ENCODE measurements at regions of chr22 and their contacts with region 1.

Region 1: DNA sequence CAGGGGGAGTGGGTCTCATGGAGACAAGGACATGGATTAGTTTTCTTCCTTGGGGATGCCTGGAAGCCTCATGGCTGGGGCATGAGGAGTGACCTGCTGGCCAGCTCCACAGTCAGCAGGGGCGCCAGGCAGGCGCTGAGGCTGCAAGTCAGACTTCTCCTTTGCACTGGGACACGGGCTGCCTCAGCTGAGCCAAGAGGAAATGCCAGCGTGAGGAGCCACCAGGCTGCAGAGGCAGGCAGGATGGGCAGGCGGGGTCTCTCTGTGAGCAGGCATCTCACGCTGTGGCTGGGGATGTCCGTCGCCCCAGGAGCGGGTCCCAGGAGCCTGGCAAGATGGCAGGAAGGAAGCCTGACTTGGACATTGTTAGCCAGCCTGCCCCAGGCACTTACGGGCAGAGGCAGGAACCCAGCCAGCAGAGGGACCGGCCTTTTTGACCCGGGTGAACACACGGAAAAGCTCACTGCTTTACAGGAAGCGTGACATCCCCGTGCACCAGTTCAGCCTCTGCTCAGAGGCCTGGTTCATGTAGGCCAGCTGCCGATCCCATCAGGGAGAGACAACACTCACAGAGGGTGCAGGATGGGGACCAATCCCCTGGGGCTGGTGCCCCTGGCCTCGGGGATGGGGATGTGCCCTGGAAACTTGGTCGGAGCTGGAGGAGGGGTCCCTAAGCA is 10.2 kb downstream of the GNB1L start:
- DNase-seq: peak in 1 of 2 experiments; percentile 58
- H3K4me3 ChIP-seq: no peak overlapping the region
- H3K27ac ChIP-seq: no peak overlapping the region
- H3K4me1 ChIP-seq: peaks cover 18% of the 10 kb centered on the region
- H3K27me3 ChIP-seq: no peaks in the 10 kb centered on the region
- CTCF ChIP-seq: no peak

Region 2: DNA sequence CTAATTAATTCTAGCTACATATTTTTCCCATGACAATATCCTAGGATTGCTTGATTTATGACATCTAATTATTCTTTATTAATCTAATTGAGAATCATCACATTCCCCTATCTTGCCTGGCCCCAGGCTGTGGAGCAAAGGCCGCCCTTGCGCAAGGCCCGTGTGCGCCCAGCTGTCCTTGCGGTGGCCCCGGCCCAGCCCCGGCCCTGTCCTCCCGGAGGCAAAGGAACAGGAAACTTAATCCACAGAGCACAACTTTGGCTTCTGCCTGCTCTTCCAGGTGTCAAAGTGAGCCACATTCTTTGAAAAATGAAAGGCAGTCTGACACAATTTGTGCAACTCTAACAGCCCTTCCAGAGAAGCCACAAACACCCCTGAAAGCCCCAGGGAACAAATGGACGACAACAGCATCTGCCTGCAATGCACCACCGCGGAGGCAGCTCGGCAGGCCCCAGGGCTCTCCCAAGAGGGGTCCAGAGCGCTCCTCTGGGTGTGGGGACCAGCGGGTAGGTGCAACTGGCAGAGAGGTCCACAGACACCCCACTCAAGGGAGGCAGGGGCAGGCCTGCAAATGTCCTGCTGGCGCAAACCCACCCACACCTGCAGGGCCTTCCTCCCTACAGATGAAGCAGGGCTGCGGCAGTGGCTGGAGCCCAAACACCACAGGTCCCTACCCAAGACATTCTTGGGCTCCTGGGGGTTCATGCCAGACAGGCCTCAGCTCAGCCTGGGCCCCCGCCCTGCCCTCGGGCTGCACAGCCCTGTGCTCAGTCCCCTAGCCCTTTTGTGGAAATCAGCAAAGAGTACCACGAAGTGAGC is 20.1 kb before region 1 on chr22:
- CTCF ChIA-PET with region 1: no interaction called
- POLR2A ChIA-PET with region 1: no interaction called
- intact Hi-C with region 1: loop called (anchors 2 kb)
- DNase-seq: peak; percentile 58 to 75
- H3K4me3 ChIP-seq: 0 out of 2 replicates have a peak overlapping the region, but pooled peaks have one; percentile 14
- H3K27ac ChIP-seq: peak overlapping the region; percentile 71
- H3K4me1 ChIP-seq: peaks cover 38% of the 10 kb centered on the region
- H3K27me3 ChIP-seq: no peaks in the 10 kb centered on the region
- CTCF ChIP-seq: no peak

Region 3: DNA sequence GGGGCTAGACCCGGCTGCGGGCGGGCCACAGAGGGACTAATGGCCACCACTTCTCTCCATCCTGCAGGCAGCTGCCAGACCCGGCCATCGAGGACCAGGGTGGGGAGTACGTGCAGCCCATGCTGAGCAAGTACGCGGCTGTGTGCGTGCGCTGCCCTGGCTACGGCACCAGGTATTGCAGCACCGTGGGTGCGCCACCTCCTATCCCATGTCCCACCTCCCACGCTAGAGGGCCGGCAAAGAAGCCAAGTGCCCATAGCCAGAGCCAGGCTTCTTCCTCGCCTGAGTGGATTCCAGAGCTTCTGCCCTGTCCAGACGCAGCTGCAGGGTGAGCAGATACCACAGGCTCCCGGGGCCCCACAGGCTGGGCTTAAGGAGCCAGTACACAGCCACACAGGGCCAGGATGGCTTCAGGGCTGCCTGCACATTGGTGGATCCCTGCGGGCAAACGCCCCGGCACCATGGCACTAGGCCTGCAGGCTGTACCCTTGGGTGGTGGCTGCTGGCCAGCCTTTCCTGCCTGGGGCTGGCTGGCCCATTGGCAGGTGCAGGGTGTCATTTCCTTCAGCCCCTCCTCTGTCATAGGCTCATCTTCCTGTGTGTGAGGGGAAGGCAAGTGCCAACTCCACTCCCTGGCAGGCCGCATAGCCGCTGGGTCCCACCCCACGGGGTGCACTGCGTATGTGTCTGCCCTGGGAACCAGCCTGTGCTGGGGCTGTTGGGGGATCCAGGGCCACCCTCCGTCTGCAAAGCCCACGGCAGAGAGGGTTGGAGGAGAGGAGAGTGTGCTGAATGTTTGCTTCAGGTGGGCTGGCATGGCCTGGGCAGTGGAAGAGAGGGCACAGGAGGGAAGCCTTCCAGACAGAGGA is 219.0 kb after region 1 on chr22:
- CTCF ChIA-PET with region 1: no interaction called
- POLR2A ChIA-PET with region 1: no interaction called
- intact Hi-C with region 1: no loop called
- DNase-seq: no peak
- H3K4me3 ChIP-seq: no peak overlapping the region
- H3K27ac ChIP-seq: no peak overlapping the region
- H3K4me1 ChIP-seq: no peaks in the 10 kb centered on the region
- H3K27me3 ChIP-seq: no peaks in the 10 kb centered on the region
- CTCF ChIP-seq: no peak

Measured in PC-9 (cell line).